Dorsolateral prefrontal cortex (tissue), 120 donors: ENCODE measurements at regions of chr7 and their contacts with region 1.

Region 1: GRCh38 chr7:51055039-51055840 is 261.4 kb downstream of the COBL start:
- DNase-seq: no peak
- H3K4me3 ChIP-seq: no peak overlapping the region
- H3K27ac ChIP-seq: peak overlapping the region in 1 of 59 donors; percentile 4
- H3K27me3 ChIP-seq: no peaks in the 10 kb centered on the region
- CTCF ChIP-seq: no peak

Region 2: GRCh38 chr7:50475340-50475739 is 579.9 kb before region 1 on chr7:
- intact Hi-C with region 1: loop called in 1 of 2 experiments (anchors 10 kb)
- DNase-seq: no peak
- H3K4me3 ChIP-seq: no peak overlapping the region
- H3K27ac ChIP-seq: no peak overlapping the region
- H3K27me3 ChIP-seq: peaks cover 0 to 5% (median 0%) of the 10 kb centered on the region in 45 donors
- CTCF ChIP-seq: no peak

Region 3: DNA sequence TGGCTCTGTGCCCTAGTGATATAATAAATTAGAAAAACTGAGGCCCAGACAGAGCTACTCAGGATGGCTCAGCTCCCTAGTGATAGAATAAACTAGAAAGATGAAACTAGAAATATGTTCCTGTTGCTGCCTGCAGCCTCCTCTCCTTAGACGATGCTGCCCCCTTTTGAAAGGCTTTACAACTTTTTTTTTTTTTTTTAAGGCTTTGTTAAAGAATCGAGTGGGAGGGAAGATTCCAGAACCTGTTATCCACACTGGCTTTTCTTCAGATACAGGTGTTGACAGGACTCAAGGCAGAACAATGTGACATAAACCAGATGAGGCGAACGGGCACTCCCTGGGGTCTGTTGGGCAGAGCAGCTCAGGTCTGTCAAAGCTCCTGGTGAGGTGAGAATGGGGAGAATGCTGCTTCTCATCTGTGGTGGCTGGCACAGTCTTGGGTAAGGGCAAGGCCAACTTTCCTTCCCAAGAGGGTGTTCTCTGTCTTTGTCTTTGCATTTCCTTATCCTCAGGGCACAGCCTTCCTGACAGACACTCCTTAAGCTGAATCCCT is 86.3 kb after region 1 on chr7:
- intact Hi-C with region 1: no loop called
- DNase-seq: no peak
- H3K4me3 ChIP-seq: no peak overlapping the region
- H3K27ac ChIP-seq: peak overlapping the region in 55 of 59 donors; percentile 0 to 85 (median 63)
- H3K27me3 ChIP-seq: no peaks in the 10 kb centered on the region
- CTCF ChIP-seq: peak; percentile 21 to 82 (median 66)